HCT116 (cell line): ENCODE measurements at regions of chr14 and their contacts with region 1.

Region 1: DNA sequence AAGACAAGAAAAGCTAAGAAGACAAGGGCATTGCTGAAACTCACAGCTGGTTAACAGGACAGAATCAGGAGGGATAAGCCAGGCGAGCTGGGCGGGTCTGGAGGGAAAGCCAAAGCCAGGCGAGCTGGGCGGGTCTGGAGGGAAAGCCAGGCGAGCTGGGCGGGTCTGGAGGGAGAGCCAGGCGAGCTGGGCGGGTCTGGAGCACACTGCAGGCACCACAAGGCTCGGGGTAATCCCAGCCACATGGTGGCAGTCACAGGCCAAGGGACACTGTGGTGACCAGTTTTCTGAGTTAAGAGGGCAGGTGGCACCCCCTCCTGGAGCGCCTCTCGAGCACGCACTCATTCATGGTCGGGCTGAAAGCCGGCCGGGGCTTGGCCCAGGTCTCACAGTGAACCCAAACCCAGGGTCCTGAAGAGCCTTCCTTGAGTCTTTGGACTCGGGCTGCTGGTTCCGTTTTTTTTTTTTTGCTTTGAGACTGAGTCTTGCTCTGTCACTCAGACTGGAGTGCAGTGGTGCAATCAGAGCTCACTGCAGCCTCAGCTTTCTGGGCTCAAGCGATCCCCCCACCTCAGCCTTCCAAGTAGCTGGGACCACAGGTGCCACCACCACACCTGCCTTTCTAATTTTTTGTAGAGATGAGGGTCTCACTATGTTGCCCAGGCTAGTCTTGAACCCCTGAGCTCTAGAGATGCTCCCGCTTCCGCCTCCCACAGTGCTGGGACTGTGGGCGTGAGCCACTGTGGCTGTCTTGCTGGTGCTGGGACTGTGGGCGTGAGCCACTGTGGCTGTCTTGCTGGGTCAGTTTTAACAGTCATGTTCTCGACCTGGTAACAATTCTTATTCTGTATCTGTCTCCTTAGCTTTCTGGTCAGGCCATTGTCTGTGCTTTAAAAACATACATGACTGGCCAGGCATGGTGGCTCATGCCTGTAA is 40.2 kb downstream of the HSP90AA1 start:
- DNase-seq: peak; percentile 82
- ATAC-seq: peak; percentile 99
- H3K4me3 ChIP-seq: no peak overlapping the region
- H3K27ac ChIP-seq: peak overlapping the region; percentile 29
- H3K4me1 ChIP-seq: peaks cover 0 to 10% of the 10 kb centered on the region in 2 experiments; a peak in 2 of 4 replicates
- H3K27me3 ChIP-seq: no peaks in the 10 kb centered on the region
- CTCF ChIP-seq: peak; percentile 78 to 99 (median 80)
- POLR2A ChIP-seq: no peak
- RAD21 ChIP-seq: peak; percentile 94

Region 2: GRCh38 chr14:101927859-101928258 is 118.8 kb before region 1 on chr14:
- CTCF ChIA-PET with region 1: no interaction called
- POLR2A ChIA-PET with region 1: no interaction called
- RAD21 ChIA-PET with region 1: no interaction called
- intact Hi-C with region 1: no loop called
- DNase-seq: no peak
- ATAC-seq: no peak
- H3K4me3 ChIP-seq: no peak overlapping the region
- H3K27ac ChIP-seq: no peak overlapping the region
- H3K4me1 ChIP-seq: no peaks in the 10 kb centered on the region
- H3K27me3 ChIP-seq: no peaks in the 10 kb centered on the region
- CTCF ChIP-seq: no peak
- POLR2A ChIP-seq: no peak
- RAD21 ChIP-seq: no peak

Region 3: DNA sequence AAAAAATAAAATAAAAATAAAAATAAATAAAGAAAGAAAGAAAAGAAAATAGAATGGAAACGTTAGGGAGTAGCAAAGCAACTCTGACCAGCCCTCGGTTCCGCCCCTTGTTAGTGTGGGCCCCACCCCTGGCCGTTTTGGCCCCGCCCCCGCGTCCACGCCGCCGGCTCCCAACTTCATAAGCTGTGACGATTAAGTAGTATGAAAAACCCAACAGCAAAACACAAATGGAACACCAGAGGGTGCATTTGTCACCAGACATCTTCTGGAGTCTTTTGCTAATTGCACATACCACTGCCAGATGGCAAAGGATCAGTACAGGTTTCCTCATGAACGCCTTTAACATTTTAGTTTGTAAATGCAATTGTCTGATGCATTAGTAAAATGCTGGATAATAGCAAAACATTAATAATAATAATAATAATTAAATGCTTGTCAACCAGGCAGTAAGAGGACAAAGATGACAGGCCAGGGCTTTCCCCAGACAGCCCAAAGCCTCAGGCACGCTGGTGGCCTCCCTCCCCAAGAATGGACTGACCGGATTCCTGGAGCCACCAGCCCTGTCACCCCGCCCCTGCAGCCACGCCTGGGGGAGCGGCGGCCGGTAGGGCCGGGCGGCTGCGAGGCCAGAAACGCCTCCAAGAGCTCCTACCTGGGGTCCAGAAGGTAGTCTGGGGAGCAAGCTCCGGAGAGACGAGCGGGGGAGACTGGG is 16.6 kb after region 1 on chr14:
- CTCF ChIA-PET with region 1: interaction called, 12 read pairs
- POLR2A ChIA-PET with region 1: no interaction called
- RAD21 ChIA-PET with region 1: interaction called in 1 of 2 experiments, 3 read pairs
- intact Hi-C with region 1: no loop called
- DNase-seq: peak; percentile 91
- ATAC-seq: peak; percentile 95
- H3K4me3 ChIP-seq: peak overlapping the region; percentile 6 to 34; a peak in 3 of 4 replicates
- H3K27ac ChIP-seq: peak overlapping the region; percentile 70
- H3K4me1 ChIP-seq: peaks cover 12 to 17% of the 10 kb centered on the region in 2 experiments
- H3K27me3 ChIP-seq: no peaks in the 10 kb centered on the region
- CTCF ChIP-seq: peak; percentile 57 to 88 (median 65)
- POLR2A ChIP-seq: no peak
- RAD21 ChIP-seq: peak; percentile 88